CD4-positive, alpha-beta T cell (primary cell): ENCODE measurements at regions of chr2 and their contacts with region 1.

Region 1: DNA sequence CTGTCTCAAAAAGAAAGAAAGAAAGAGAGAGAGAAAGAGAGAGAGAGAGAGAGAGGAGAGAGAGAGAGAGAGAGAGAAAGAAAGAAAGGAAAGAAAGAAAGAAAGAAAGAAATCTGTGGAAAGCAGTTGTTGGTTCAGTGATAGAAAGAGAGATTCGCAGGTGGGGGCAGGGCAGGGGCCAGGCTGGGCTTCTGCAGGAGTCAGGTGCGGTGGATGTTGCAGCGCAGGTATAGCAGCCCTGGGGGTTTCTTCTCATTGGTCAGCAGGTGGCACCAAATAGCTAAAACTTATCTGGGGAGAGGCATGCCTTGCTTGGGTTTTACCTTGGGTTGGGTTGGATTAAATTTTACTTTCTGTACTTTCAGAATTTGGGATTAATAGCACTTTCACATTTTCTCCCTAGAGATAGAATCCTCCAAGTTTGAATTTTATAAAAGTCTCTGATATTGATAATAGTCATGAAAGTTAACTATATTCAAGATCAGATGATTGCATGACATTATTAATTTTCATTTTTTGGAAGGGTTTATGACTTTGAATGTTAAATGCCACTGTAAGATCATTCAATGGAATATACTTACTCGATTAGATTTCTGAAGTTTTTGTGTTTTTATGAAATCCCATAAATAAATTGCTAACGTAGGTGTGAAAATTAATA is 66.6 kb downstream of the SPTBN1 start:
- DNase-seq: peak; percentile 48 to 90 (median 59)
- ATAC-seq: peak; percentile 100
- H3K4me3 ChIP-seq: no peak overlapping the region
- H3K4me3 Mint-ChIP-seq: no peak overlapping the region
- H3K27ac ChIP-seq: no peak overlapping the region
- H3K27ac Mint-ChIP-seq: no peak overlapping the region
- H3K4me1 ChIP-seq: peaks cover 3% of the 10 kb centered on the region
- H3K4me1 Mint-ChIP-seq: peaks cover 5% of the 10 kb centered on the region
- H3K27me3 ChIP-seq: no peaks in the 10 kb centered on the region
- H3K27me3 Mint-ChIP-seq: no peaks in the 10 kb centered on the region
- CTCF ChIP-seq: peak; percentile 77

Region 2: GRCh38 chr2:54106631-54107454 is 415.9 kb before region 1 on chr2:
- CTCF ChIA-PET with region 1: interaction called, 3 read pairs
- POLR2A ChIA-PET with region 1: no interaction called
- intact Hi-C with region 1: loop called in 1 of 2 experiments (anchors 5 kb)
- DNase-seq: peak in 12 of 14 experiments; percentile 11 to 77 (median 30)
- ATAC-seq: peak; percentile 78
- H3K4me3 ChIP-seq: no peak overlapping the region
- H3K4me3 Mint-ChIP-seq: no peak overlapping the region
- H3K27ac ChIP-seq: no peak overlapping the region
- H3K27ac Mint-ChIP-seq: no peak overlapping the region
- H3K4me1 ChIP-seq: peaks cover 8% of the 10 kb centered on the region
- H3K4me1 Mint-ChIP-seq: peaks cover 11% of the 10 kb centered on the region
- H3K27me3 ChIP-seq: no peaks in the 10 kb centered on the region
- H3K27me3 Mint-ChIP-seq: no peaks in the 10 kb centered on the region
- CTCF ChIP-seq: peak; percentile 66

Region 3: GRCh38 chr2:54606393-54606969 is 83.7 kb after region 1 on chr2:
- CTCF ChIA-PET with region 1: interaction called, 4 read pairs
- POLR2A ChIA-PET with region 1: no interaction called
- intact Hi-C with region 1: loop called in 1 of 2 experiments (anchors 2 kb)
- DNase-seq: peak in 13 of 14 experiments; percentile 21 to 69 (median 44)
- ATAC-seq: peak; percentile 97
- H3K4me3 ChIP-seq: no peak overlapping the region
- H3K4me3 Mint-ChIP-seq: peak overlapping the region; percentile 77
- H3K27ac ChIP-seq: no peak overlapping the region
- H3K27ac Mint-ChIP-seq: peak overlapping the region; percentile 96
- H3K4me1 ChIP-seq: peaks cover 63% of the 10 kb centered on the region
- H3K4me1 Mint-ChIP-seq: peaks cover 90% of the 10 kb centered on the region
- H3K27me3 ChIP-seq: no peaks in the 10 kb centered on the region
- H3K27me3 Mint-ChIP-seq: no peaks in the 10 kb centered on the region
- CTCF ChIP-seq: no peak

Region 4: GRCh38 chr2:54634564-54635511 is 112.1 kb after region 1 on chr2:
- CTCF ChIA-PET with region 1: interaction called, 5 read pairs
- POLR2A ChIA-PET with region 1: no interaction called
- intact Hi-C with region 1: loop called (anchors 5 kb)
- DNase-seq: peak in 3 of 14 experiments; percentile 36 to 49 (median 42)
- ATAC-seq: peak; percentile 77
- H3K4me3 ChIP-seq: no peak overlapping the region
- H3K4me3 Mint-ChIP-seq: peak overlapping the region; percentile 44
- H3K27ac ChIP-seq: peak overlapping the region in 1 of 2 donors; percentile 7
- H3K27ac Mint-ChIP-seq: peak overlapping the region; percentile 49
- H3K4me1 ChIP-seq: peaks cover 8% of the 10 kb centered on the region
- H3K4me1 Mint-ChIP-seq: peaks cover 42% of the 10 kb centered on the region
- H3K27me3 ChIP-seq: no peaks in the 10 kb centered on the region
- H3K27me3 Mint-ChIP-seq: no peaks in the 10 kb centered on the region
- CTCF ChIP-seq: no peak

Region 5: GRCh38 chr2:54665436-54665856 is 142.7 kb after region 1 on chr2:
- CTCF ChIA-PET with region 1: interaction called, 12 read pairs
- POLR2A ChIA-PET with region 1: no interaction called
- intact Hi-C with region 1: loop called in 1 of 2 experiments (anchors 1 kb)
- DNase-seq: peak in 9 of 14 experiments; percentile 10 to 71 (median 32)
- ATAC-seq: peak; percentile 77
- H3K4me3 ChIP-seq: no peak overlapping the region
- H3K4me3 Mint-ChIP-seq: no peak overlapping the region
- H3K27ac ChIP-seq: no peak overlapping the region
- H3K27ac Mint-ChIP-seq: peak overlapping the region; percentile 18
- H3K4me1 ChIP-seq: no peaks in the 10 kb centered on the region
- H3K4me1 Mint-ChIP-seq: peaks cover 5% of the 10 kb centered on the region
- H3K27me3 ChIP-seq: no peaks in the 10 kb centered on the region
- H3K27me3 Mint-ChIP-seq: no peaks in the 10 kb centered on the region
- CTCF ChIP-seq: peak; percentile 55

Region 6: DNA sequence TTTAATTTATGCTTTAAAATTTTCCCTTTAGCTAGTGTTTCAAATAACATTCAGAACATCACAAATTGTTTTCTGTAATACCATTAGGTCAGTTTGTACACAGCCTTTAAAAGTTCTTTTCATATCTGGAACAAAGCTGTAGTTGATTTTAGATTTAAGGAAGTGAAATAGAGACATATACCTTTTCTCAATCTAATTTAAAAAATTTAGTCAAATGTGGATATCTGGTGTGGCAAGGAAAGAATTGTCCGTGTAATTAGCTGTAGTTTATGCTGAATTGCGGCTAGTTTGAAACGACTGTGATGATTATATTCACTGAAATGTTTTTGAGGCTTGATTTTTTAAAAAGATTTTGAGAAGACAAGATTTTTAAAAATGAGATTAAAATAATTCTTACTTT is 260.6 kb after region 1 on chr2:
- CTCF ChIA-PET with region 1: no interaction called
- POLR2A ChIA-PET with region 1: no interaction called
- intact Hi-C with region 1: no loop called
- DNase-seq: no peak
- ATAC-seq: no peak
- H3K4me3 ChIP-seq: no peak overlapping the region
- H3K4me3 Mint-ChIP-seq: no peak overlapping the region
- H3K27ac ChIP-seq: no peak overlapping the region
- H3K27ac Mint-ChIP-seq: no peak overlapping the region
- H3K4me1 ChIP-seq: no peaks in the 10 kb centered on the region
- H3K4me1 Mint-ChIP-seq: no peaks in the 10 kb centered on the region
- H3K27me3 ChIP-seq: no peaks in the 10 kb centered on the region
- H3K27me3 Mint-ChIP-seq: no peaks in the 10 kb centered on the region
- CTCF ChIP-seq: no peak

Region 7: GRCh38 chr2:54838585-54839035 is 315.9 kb after region 1 on chr2:
- CTCF ChIA-PET with region 1: no interaction called
- POLR2A ChIA-PET with region 1: no interaction called
- intact Hi-C with region 1: loop called (anchors 1 kb)
- DNase-seq: peak; percentile 37 to 82 (median 54)
- ATAC-seq: peak; percentile 73
- H3K4me3 ChIP-seq: no peak overlapping the region
- H3K4me3 Mint-ChIP-seq: no peak overlapping the region
- H3K27ac ChIP-seq: no peak overlapping the region
- H3K27ac Mint-ChIP-seq: no peak overlapping the region
- H3K4me1 ChIP-seq: no peaks in the 10 kb centered on the region
- H3K4me1 Mint-ChIP-seq: no peaks in the 10 kb centered on the region
- H3K27me3 ChIP-seq: no peaks in the 10 kb centered on the region
- H3K27me3 Mint-ChIP-seq: no peaks in the 10 kb centered on the region
- CTCF ChIP-seq: peak; percentile 92